Endothelial cell of umbilical vein (primary cell): ENCODE measurements at regions of chrX and their contacts with region 1.

Region 1: GRCh38 chrX:10050481-10050880 is 83.3 kb downstream of the CLDN34 start:
- DNase-seq: peak; percentile 23
- H3K4me3 ChIP-seq: no peak overlapping the region
- H3K27ac ChIP-seq: no peak overlapping the region
- H3K4me1 ChIP-seq: peaks cover 66% of the 10 kb centered on the region
- H3K27me3 ChIP-seq: no peaks in the 10 kb centered on the region
- CTCF ChIP-seq: no peak
- POLR2A ChIP-seq: no peak

Region 2: GRCh38 chrX:9995855-9996339 is 54.6 kb before region 1 on chrX:
- CTCF ChIA-PET with region 1: interaction called, 3 read pairs
- POLR2A ChIA-PET with region 1: no interaction called
- dilution Hi-C with region 1: no loop called
- intact Hi-C with region 1: loop called (anchors 2 kb)
- DNase-seq: peak; percentile 73
- H3K4me3 ChIP-seq: no peak overlapping the region
- H3K27ac ChIP-seq: no peak overlapping the region
- H3K4me1 ChIP-seq: no peaks in the 10 kb centered on the region
- H3K27me3 ChIP-seq: no peaks in the 10 kb centered on the region
- CTCF ChIP-seq: peak; percentile 75 to 88
- POLR2A ChIP-seq: no peak

Region 3: DNA sequence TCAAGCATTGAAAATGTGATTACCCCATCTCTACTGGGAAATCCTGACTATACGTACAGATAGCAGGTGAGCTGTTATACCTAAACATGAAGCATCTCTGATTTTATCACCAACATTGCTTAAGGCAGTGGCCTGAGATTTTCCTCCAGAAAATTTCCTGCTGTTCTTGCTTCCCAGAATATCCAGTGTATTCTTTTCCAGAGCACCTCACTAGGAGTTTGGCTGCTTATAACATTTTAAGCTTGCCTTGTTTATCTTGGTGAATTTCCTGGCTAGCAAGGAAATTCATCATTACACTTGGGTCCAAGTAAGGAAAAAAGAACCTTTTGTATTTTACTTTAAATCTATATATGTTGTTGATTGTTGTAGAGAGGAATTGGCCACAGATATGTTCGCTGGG is 33.3 kb after region 1 on chrX:
- CTCF ChIA-PET with region 1: no interaction called
- POLR2A ChIA-PET with region 1: no interaction called
- dilution Hi-C with region 1: no loop called
- intact Hi-C with region 1: loop called (anchors 1 kb)
- DNase-seq: peak; percentile 17
- H3K4me3 ChIP-seq: no peak overlapping the region
- H3K27ac ChIP-seq: peak overlapping the region; percentile 55
- H3K4me1 ChIP-seq: peaks cover 41% of the 10 kb centered on the region
- H3K27me3 ChIP-seq: no peaks in the 10 kb centered on the region
- CTCF ChIP-seq: no peak
- POLR2A ChIP-seq: no peak

Region 4: DNA sequence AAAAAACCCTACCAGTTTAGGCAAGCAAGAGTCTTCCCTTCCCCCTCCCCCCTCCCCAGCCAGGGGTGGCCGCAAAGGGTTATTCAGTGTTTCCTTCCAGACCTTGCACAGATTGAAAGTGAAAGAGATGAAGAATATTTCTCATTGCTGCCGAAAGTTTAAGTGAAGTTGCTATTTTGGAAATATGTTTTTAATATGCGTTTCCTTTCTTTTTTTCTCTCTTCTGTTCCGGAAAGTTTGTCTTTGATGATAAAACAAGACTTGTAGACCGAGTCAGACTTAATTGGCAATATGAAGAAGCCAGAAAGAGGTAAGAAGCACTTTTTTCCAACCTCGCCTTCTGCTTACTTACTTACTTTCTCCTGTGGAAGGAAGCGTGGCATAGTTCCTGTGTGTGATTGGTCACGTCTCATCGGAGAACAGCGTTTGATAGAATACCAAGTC is 47.8 kb after region 1 on chrX:
- CTCF ChIA-PET with region 1: no interaction called
- POLR2A ChIA-PET with region 1: no interaction called
- dilution Hi-C with region 1: no loop called
- intact Hi-C with region 1: no loop called
- DNase-seq: peak; percentile 43
- H3K4me3 ChIP-seq: no peak overlapping the region
- H3K27ac ChIP-seq: no peak overlapping the region
- H3K4me1 ChIP-seq: no peaks in the 10 kb centered on the region
- H3K27me3 ChIP-seq: no peaks in the 10 kb centered on the region
- CTCF ChIP-seq: no peak
- POLR2A ChIP-seq: no peak